Spleen (tissue), 13 donors: ENCODE measurements at regions of chr20 and their contacts with region 1.

Region 1: GRCh38 chr20:9609887-9610502 is 95.6 kb downstream of the LAMP5 start:
- DNase-seq: no peak
- H3K4me3 ChIP-seq: no peak overlapping the region
- H3K27ac ChIP-seq: no peak overlapping the region
- H3K4me1 ChIP-seq: no peaks in the 10 kb centered on the region
- H3K27me3 ChIP-seq: peaks cover 0 to 23% (median 0%) of the 10 kb centered on the region in 7 donors
- CTCF ChIP-seq: peak; percentile 9 to 74 (median 60)
- POLR2A ChIP-seq: no peak

Region 2: DNA sequence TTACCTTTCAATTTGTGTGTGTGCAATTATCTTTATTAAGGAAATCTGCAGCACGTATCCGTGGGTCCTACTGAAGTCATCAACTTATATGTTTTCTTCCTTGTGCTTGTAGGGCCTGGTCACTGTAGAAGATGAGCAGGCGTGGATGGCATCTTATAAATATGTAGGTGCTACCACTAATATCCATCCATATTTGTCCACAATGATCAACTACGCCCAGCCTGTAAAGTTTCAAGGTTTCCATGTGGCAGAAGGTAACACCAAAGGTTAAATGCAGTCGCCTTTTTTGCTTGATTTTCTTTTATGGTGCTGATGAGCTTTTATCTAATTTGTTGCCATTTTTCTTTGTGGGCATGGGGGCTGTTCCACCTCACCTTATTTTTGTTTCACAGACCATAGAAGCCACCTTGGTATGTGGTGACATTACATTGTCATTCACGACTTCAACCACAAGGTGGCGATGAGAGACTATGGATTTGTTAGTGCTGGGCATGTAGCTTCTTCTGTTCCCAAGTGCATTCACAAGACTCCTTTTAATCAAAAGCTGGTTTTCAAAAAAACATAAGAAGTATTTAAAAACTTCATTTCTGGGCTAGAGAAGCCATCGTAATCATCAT is 202.1 kb before region 1 on chr20:
- intact Hi-C with region 1: loop called (anchors 5 kb)
- DNase-seq: no peak
- H3K4me3 ChIP-seq: no peak overlapping the region
- H3K27ac ChIP-seq: no peak overlapping the region
- H3K4me1 ChIP-seq: no peaks in the 10 kb centered on the region
- H3K27me3 ChIP-seq: no peaks in the 10 kb centered on the region
- CTCF ChIP-seq: peak; percentile 55 to 81 (median 76)
- POLR2A ChIP-seq: no peak

Region 3: GRCh38 chr20:9482180-9482579 is 127.8 kb before region 1 on chr20:
- intact Hi-C with region 1: no loop called
- DNase-seq: no peak
- H3K4me3 ChIP-seq: no peak overlapping the region
- H3K27ac ChIP-seq: no peak overlapping the region
- H3K4me1 ChIP-seq: peaks cover 0 to 17% (median 10%) of the 10 kb centered on the region in 6 donors
- H3K27me3 ChIP-seq: no peaks in the 10 kb centered on the region
- CTCF ChIP-seq: no peak
- POLR2A ChIP-seq: no peak